AG04450 (cell line): ENCODE measurements at regions of chr6 and their contacts with region 1.

Region 1: DNA sequence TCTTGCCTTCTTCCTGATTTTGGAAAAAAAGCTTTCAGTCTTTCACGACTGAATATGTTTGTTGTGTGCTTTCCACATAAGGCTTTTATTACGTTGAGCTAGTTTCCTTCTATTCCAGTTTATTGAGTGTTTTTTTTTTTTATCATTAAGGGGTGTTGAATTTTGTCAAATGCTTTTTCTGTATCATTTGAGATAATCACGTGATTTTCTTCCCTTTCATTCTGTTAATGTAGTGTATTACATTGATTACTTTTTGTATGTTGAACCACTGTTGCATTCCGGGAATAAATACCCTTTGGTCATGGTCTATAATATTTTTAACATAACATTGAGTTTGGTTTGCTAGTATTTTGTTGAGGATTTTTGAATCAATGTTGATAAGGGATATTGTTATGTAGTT is 23.4 kb upstream of the SMLR1 start:
- DNase-seq: no peak
- H3K4me3 ChIP-seq: no peak overlapping the region
- H3K27ac ChIP-seq: no peak overlapping the region
- H3K27me3 ChIP-seq: no peaks in the 10 kb centered on the region
- CTCF ChIP-seq: no peak

Region 2: GRCh38 chr6:130385064-130385695 is 418.6 kb before region 1 on chr6:
- CTCF ChIA-PET with region 1: no interaction called
- POLR2A ChIA-PET with region 1: no interaction called
- DNase-seq: no peak
- H3K4me3 ChIP-seq: no peak overlapping the region
- H3K27ac ChIP-seq: no peak overlapping the region
- H3K27me3 ChIP-seq: no peaks in the 10 kb centered on the region
- CTCF ChIP-seq: no peak

Region 3: GRCh38 chr6:130831607-130832006 is 27.8 kb after region 1 on chr6:
- CTCF ChIA-PET with region 1: no interaction called
- POLR2A ChIA-PET with region 1: interaction called, 11 read pairs
- DNase-seq: no peak
- H3K4me3 ChIP-seq: no peak overlapping the region
- H3K27ac ChIP-seq: no peak overlapping the region
- H3K27me3 ChIP-seq: no peaks in the 10 kb centered on the region
- CTCF ChIP-seq: no peak